ENCODE measurements at regions of chr2 and their contacts with region 1.

Region 1: DNA sequence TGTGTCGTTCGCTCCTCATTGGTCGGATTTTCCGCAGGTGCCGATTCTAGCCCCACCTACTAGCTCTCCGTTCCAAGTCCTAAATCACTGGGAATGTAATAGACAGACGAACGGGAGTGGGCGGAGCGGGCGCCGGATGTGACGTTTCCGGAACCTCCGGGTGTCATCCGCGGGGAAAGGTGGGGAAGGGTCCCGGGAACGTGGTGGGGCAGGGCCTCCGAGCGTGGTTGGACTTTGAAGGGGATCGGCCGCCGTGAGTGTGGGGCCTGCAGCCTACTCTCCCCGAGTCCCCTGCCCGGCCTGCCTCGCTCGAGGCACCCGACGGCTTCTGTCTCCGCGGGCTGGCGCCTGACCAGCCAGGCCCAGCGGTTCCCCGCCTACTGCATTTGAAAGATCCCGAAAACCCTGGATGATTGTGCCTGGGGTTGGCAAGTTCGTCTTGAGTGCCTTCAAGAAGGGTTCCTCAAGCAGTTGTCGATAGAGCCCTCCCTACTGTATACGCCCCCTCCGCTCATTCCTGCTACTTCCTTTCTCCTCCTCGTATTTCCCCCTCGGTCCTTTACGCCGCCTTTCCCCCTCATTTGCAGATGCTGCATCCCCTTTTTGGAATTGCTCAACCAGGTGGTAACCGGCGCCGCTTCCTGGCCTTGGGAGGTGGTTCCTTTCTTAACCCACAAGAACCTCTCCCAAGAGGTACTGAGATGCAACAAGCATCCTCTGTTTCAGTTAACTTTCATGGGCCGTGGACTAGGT is at the start of gene STAMBP:
- DNase-seq: peak; percentile 95
- ATAC-seq: peak; percentile 75
- H3K4me3 Mint-ChIP-seq: peak within 1 kb of the TSS; percentile 97
- H3K27ac Mint-ChIP-seq: peak within 1 kb of the TSS; percentile 98
- H3K4me1 Mint-ChIP-seq: peaks cover 53% of the 10 kb centered on the region
- H3K27me3 Mint-ChIP-seq: no peaks in the 10 kb centered on the region
- total RNA-seq, gene STAMBP: 104 to 111 TPM

Region 2: DNA sequence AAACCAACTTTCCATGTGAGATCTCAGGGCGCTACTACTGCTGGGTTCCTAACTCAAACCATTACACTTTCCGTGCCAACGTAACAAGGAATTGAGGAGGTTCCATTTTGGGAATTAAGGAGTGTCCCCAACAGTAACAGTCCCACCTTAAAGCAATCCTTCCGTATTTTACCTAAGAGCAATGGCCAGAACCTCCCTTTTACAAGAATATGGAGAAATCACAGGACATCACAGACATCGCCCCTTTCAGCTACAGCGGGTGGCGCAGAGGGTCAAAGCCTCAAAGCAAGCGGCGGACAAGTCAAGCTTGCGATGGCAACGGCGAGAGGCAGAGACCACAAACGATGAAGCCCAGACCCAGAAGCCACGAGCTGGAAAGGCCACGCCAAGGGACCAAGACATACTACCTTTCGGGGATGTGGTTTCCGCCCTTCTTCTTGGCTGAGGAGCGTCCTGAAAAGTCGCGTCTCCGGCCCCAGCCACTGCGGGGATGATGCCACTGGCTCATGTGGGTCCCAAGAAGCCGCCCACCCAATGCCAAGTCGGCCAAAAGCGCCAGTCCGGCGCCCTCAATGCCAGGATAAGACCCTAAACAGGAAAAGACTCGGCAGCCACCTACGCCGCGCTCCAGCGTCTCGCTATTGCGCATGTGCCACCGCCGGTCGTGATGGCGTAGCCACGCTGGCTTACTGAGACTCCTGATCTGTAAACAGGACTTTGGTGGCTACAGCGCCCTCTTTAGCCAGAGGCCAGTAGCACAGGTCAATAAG is 49.3 kb before region 1 on chr2 and contains the start of gene DUSP11:
- CTCF ChIA-PET with region 1: interaction called, 4 read pairs
- POLR2A ChIA-PET with region 1: interaction called, 3 read pairs
- intact Hi-C with region 1: loop called in 1 of 2 experiments (anchors 1 kb)
- DNase-seq: peak; percentile 98
- ATAC-seq: peak; percentile 100
- H3K4me3 Mint-ChIP-seq: peak within 1 kb of the TSS; percentile 100
- H3K27ac Mint-ChIP-seq: peak within 1 kb of the TSS; percentile 98
- H3K4me1 Mint-ChIP-seq: peaks cover 27% of the 10 kb centered on the region
- H3K27me3 Mint-ChIP-seq: peaks cover 2% of the 10 kb centered on the region
- total RNA-seq, gene DUSP11: 27.6 to 33.5 TPM

Region 3: DNA sequence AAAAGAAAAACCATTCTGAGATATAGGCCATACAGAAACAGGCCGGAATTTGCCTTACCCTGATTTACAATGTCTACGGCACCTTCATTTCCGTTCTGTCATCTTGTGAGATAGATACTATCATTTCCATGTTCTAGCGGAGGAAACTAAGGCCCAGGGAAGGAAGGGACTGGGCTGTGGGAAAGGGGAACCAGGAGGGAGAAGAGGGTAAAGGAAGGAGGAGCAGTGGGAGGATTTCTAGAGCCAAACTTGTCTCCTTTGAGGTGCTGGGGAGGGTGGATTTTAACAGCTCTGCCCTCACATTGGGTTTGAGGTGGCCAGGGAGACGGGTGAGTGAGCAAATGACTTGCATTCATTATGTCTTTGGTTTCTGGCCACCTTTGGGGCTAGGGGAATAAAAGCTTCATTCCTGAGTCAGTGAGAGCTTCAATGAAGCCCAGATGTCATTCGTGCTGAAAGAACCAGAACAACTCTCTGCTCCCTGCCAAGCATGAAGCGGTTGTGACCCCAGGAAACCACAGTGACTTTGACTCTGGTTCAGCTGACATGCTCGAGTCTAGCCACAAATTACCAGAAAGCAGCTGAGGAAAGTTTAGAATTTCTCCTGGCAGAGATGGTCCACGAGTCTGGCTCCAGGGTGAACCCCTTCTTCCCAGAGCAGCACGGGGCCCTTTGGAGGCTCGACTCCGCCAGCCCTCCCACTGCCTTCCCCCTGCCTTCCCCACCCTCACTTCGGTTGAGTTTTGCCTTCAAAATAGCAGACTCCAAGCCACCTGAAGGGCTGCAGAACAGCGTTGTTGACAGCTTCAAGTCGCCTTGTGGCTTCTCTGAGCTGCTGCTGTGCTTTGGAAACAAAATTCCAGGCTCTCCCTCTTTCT is 67.6 kb after region 1 on chr2:
- CTCF ChIA-PET with region 1: interaction called, 8 read pairs
- POLR2A ChIA-PET with region 1: no interaction called
- intact Hi-C with region 1: loop called in 1 of 2 experiments (anchors 2 kb)
- DNase-seq: peak; percentile 66
- ATAC-seq: peak; percentile 88
- H3K4me3 Mint-ChIP-seq: no peak overlapping the region
- H3K27ac Mint-ChIP-seq: peak overlapping the region; percentile 56
- H3K4me1 Mint-ChIP-seq: peaks cover 33% of the 10 kb centered on the region
- H3K27me3 Mint-ChIP-seq: no peaks in the 10 kb centered on the region

Region 4: DNA sequence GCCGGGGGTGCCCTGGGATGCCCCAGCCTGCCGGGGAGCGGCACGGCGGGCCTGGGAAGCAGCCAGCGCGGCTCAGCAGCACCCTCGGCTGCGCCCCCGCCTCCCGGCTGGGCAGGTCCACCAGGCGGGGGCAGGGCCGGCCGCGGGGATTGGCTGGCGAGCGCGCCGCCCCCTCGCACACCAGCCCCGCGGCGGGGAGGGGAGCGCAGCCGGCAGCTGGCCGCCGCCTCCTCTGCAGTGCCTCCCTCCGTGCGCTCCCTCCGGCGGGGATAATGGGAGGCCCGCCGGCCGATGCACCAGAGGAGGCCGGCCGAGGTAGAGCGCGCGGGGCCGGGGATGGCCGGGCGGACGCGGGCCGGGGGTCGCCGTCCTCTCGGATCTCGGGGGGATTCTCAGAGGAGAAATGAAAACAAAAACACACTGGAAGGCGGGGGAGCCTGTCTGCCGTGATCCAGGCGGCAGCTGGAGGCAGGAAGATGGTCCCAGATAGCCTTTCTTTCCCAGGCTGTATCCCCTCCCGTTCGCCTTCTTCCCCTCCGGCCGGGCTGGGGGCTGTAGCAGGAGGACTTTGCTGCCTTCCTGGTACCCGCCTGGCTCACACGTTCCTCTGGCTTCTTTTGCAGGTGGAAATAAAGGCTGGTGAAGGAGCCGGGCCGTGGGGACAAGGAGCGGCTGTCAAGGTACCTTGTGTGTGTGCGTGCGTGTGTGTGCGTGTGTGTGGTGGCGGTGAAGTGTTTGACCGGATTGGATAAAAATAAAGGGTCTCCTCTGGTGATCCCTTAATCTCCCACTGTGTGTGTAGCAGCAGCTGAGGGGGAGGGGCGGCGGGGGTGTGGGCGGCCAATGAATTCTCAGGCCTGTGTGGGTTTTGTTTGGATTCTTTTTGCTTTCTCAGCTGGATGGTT is 173.7 kb after region 1 on chr2:
- CTCF ChIA-PET with region 1: interaction called, 8 read pairs
- POLR2A ChIA-PET with region 1: no interaction called
- intact Hi-C with region 1: loop called in 1 of 2 experiments (anchors 1 kb)
- DNase-seq: peak; percentile 89
- ATAC-seq: peak; percentile 81
- H3K4me3 Mint-ChIP-seq: peak overlapping the region; percentile 77
- H3K27ac Mint-ChIP-seq: peak overlapping the region; percentile 71
- H3K4me1 Mint-ChIP-seq: peaks cover 81% of the 10 kb centered on the region
- H3K27me3 Mint-ChIP-seq: no peaks in the 10 kb centered on the region

Region 5: GRCh38 chr2:74178201-74179062 is 349.4 kb after region 1 on chr2 and contains the start of gene MOB1A:
- CTCF ChIA-PET with region 1: interaction called, 16 read pairs
- POLR2A ChIA-PET with region 1: interaction called, 5 read pairs
- intact Hi-C with region 1: loop called (anchors 1 to 10 kb)
- DNase-seq: peak; percentile 99
- ATAC-seq: peak; percentile 95
- H3K4me3 Mint-ChIP-seq: peak within 1 kb of the TSS; percentile 82
- H3K27ac Mint-ChIP-seq: peak within 1 kb of the TSS; percentile 87
- H3K4me1 Mint-ChIP-seq: peaks cover 42% of the 10 kb centered on the region
- H3K27me3 Mint-ChIP-seq: no peaks in the 10 kb centered on the region
- total RNA-seq, gene MOB1A: 96.6 to 149 TPM

Region 6: GRCh38 chr2:74458132-74458925 is 629.3 kb after region 1 on chr2 and contains the start of gene WBP1:
- CTCF ChIA-PET with region 1: no interaction called
- POLR2A ChIA-PET with region 1: no interaction called
- intact Hi-C with region 1: loop called in 1 of 2 experiments (anchors 1 kb)
- DNase-seq: peak; percentile 99
- ATAC-seq: peak; percentile 88
- H3K4me3 Mint-ChIP-seq: peak within 1 kb of the TSS; percentile 90
- H3K27ac Mint-ChIP-seq: peak within 1 kb of the TSS; percentile 99
- H3K4me1 Mint-ChIP-seq: peaks cover 37% of the 10 kb centered on the region
- H3K27me3 Mint-ChIP-seq: no peaks in the 10 kb centered on the region
- total RNA-seq, gene WBP1: 24.9 to 30.2 TPM